ENCODE measurements at regions of chr1 and their contacts with region 1.

Region 1: DNA sequence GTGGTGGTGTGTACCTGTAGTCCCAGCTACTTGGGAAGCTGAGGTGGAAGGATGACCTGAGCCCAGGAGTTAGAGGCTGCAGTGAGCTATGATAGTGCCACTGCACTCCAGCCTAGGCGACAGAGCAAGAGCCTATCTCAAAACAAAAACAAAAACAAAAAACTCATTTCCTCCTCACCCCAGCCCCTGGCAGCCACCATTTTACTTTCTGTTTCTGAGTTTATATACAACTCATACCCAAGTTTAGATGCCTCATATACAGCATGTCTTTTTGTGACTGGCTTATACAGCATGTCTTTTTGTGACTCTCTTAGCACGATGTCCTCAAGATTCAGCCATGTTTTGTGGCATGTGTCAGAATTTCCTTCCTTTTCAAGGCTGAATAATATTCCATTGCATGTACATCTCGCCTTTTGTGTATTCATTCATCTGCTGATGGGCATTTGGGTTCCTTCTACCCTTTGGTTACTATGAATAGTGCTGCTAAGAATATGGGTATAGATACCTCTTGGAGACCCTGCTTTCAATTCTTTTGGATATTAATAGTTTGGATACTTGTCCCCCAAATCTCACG is 14.7 kb downstream of the COA7 start:
- DNase-seq: no peak
- ATAC-seq: no peak
- H3K4me3 ChIP-seq: no peak overlapping the region
- H3K4me3 Mint-ChIP-seq: no peak overlapping the region
- H3K27ac ChIP-seq: no peak overlapping the region
- H3K27ac Mint-ChIP-seq: no peak overlapping the region
- H3K4me1 ChIP-seq: peaks cover 9% of the 10 kb centered on the region
- H3K4me1 Mint-ChIP-seq: peaks cover 9% of the 10 kb centered on the region
- H3K27me3 ChIP-seq: no peaks in the 10 kb centered on the region
- H3K27me3 Mint-ChIP-seq: no peaks in the 10 kb centered on the region
- CTCF ChIP-seq: no peak

Region 2: DNA sequence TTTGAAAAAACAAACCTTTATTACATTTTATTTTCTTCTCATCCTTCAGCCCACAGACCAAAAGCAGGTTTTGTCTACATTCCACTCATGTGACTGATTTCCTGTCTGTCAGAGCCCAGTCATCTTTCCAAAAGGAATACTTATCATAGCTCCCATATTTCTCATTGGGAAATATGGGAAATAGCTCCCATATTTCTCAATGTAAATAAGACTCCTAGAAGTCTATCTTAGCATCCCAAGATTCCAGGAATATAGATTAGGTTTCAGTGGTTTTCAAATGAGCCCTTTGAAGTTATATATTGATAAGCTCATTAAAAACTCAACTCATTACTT is 785.8 kb before region 1 on chr1:
- CTCF ChIA-PET with region 1: interaction called, 3 read pairs
- POLR2A ChIA-PET with region 1: no interaction called
- intact Hi-C with region 1: loop called in 1 of 2 experiments (anchors 2 kb)
- DNase-seq: no peak
- ATAC-seq: no peak
- H3K4me3 ChIP-seq: no peak overlapping the region
- H3K4me3 Mint-ChIP-seq: no peak overlapping the region
- H3K27ac ChIP-seq: no peak overlapping the region
- H3K27ac Mint-ChIP-seq: no peak overlapping the region
- H3K4me1 ChIP-seq: no peaks in the 10 kb centered on the region
- H3K4me1 Mint-ChIP-seq: no peaks in the 10 kb centered on the region
- H3K27me3 ChIP-seq: peaks cover 9 to 15% of the 10 kb centered on the region in 2 experiments
- H3K27me3 Mint-ChIP-seq: peaks cover 65% of the 10 kb centered on the region
- CTCF ChIP-seq: no peak

Region 3: GRCh38 chr1:52141513-52142219 is 541.8 kb before region 1 on chr1 and contains the start of gene ZFYVE9:
- CTCF ChIA-PET with region 1: no interaction called
- POLR2A ChIA-PET with region 1: no interaction called
- intact Hi-C with region 1: loop called (anchors 5 kb)
- DNase-seq: peak; percentile 43 to 91 (median 68)
- ATAC-seq: peak; percentile 82
- H3K4me3 ChIP-seq: peak within 1 kb of the TSS; percentile 63
- H3K4me3 Mint-ChIP-seq: peak within 1 kb of the TSS; percentile 97
- H3K27ac ChIP-seq: no peak within 1 kb of the TSS
- H3K27ac Mint-ChIP-seq: peak within 1 kb of the TSS; percentile 85
- H3K4me1 ChIP-seq: peaks cover 23% of the 10 kb centered on the region
- H3K4me1 Mint-ChIP-seq: peaks cover 36% of the 10 kb centered on the region
- H3K27me3 ChIP-seq: no peaks in the 10 kb centered on the region
- H3K27me3 Mint-ChIP-seq: no peaks in the 10 kb centered on the region
- CTCF ChIP-seq: peak; percentile 33
- total RNA-seq, gene ZFYVE9: 5.4 to 6.1 TPM

Region 4: GRCh38 chr1:52288286-52288685 is 395.2 kb before region 1 on chr1:
- CTCF ChIA-PET with region 1: no interaction called
- POLR2A ChIA-PET with region 1: no interaction called
- intact Hi-C with region 1: no loop called
- DNase-seq: no peak
- ATAC-seq: no peak
- H3K4me3 ChIP-seq: no peak overlapping the region
- H3K4me3 Mint-ChIP-seq: no peak overlapping the region
- H3K27ac ChIP-seq: no peak overlapping the region
- H3K27ac Mint-ChIP-seq: no peak overlapping the region
- H3K4me1 ChIP-seq: no peaks in the 10 kb centered on the region
- H3K4me1 Mint-ChIP-seq: no peaks in the 10 kb centered on the region
- H3K27me3 ChIP-seq: no peaks in the 10 kb centered on the region
- H3K27me3 Mint-ChIP-seq: no peaks in the 10 kb centered on the region
- CTCF ChIP-seq: no peak

Region 5: DNA sequence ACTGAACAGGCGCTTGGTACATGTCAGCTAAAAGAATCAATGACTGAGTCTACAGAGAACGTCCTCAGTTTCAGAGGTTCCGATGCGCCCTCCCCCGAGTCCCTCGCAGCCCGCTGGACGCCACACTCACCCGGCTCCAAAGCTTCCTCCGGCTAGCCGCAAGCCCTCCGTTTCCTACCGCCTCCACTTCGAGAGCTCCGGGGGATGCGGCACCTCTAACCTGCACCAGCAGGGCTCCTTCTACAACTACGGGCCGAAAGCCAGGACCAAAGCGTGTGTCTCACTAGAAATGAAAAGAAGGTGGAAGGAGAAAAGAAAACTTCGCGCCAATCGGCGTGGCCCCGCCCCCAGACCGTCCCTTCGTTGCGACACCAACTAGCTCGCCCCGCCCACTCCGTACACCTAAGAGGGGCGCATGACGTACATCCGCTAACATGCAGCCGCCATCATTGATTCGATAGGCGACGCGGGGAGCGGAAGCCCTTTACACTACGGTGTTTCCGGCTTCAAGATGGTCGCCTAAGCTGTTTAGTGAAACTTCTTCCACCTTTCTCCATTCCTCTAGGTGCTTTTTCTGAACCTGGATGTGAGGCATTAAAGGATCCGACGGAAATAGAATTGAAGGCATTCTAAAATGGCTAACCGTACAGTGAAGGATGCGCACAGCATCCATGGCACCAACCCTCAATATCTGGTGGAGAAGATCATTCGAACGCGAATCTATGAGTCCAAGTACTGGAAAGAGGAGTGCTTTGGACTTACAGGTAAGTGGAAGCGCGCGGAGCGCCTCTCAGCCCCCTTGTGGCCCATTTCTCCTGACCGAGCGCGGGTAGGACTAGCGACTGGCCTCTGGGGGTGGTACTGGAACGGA is 279.1 kb before region 1 on chr1 and contains the starts of genes ORC1 and PRPF38A:
- CTCF ChIA-PET with region 1: interaction called, 6 read pairs
- POLR2A ChIA-PET with region 1: interaction called, 8 read pairs
- intact Hi-C with region 1: loop called (anchors 1 to 10 kb)
- DNase-seq: peak; percentile 94 to 100 (median 97)
- ATAC-seq: peak; percentile 89
- H3K4me3 ChIP-seq: peak within 1 kb of the TSS; percentile 62
- H3K4me3 Mint-ChIP-seq: peak within 1 kb of the TSS; percentile 98
- H3K27ac ChIP-seq: peak within 1 kb of the TSS; percentile 88 to 89
- H3K27ac Mint-ChIP-seq: peak within 1 kb of the TSS; percentile 99
- H3K4me1 ChIP-seq: peaks cover 13% of the 10 kb centered on the region
- H3K4me1 Mint-ChIP-seq: peaks cover 48% of the 10 kb centered on the region
- H3K27me3 ChIP-seq: no peaks in the 10 kb centered on the region
- H3K27me3 Mint-ChIP-seq: no peaks in the 10 kb centered on the region
- CTCF ChIP-seq: peak; percentile 34
- total RNA-seq, gene ORC1: 1.1 to 1.3 TPM
- total RNA-seq, gene PRPF38A: 56.2 to 63.6 TPM

Region 6: GRCh38 chr1:52474807-52475206 is 208.6 kb before region 1 on chr1:
- CTCF ChIA-PET with region 1: interaction called, 6 read pairs
- POLR2A ChIA-PET with region 1: no interaction called
- intact Hi-C with region 1: loop called in 1 of 2 experiments (anchors 10 kb)
- DNase-seq: no peak
- ATAC-seq: no peak
- H3K4me3 ChIP-seq: no peak overlapping the region
- H3K4me3 Mint-ChIP-seq: no peak overlapping the region
- H3K27ac ChIP-seq: no peak overlapping the region
- H3K27ac Mint-ChIP-seq: no peak overlapping the region
- H3K4me1 ChIP-seq: no peaks in the 10 kb centered on the region
- H3K4me1 Mint-ChIP-seq: peaks cover 5% of the 10 kb centered on the region
- H3K27me3 ChIP-seq: no peaks in the 10 kb centered on the region
- H3K27me3 Mint-ChIP-seq: no peaks in the 10 kb centered on the region
- CTCF ChIP-seq: no peak

Region 7: GRCh38 chr1:52601991-52602855 is 81.2 kb before region 1 on chr1 and contains the start of gene GPX7:
- CTCF ChIA-PET with region 1: interaction called, 4 read pairs
- POLR2A ChIA-PET with region 1: interaction called, 4 read pairs
- intact Hi-C with region 1: loop called in 1 of 2 experiments (anchors 5 kb)
- DNase-seq: peak; percentile 42 to 86 (median 64)
- ATAC-seq: peak; percentile 84
- H3K4me3 ChIP-seq: peak within 1 kb of the TSS; percentile 74
- H3K4me3 Mint-ChIP-seq: peak within 1 kb of the TSS; percentile 92
- H3K27ac ChIP-seq: peak within 1 kb of the TSS; percentile 62 to 73
- H3K27ac Mint-ChIP-seq: peak within 1 kb of the TSS; percentile 96
- H3K4me1 ChIP-seq: peaks cover 51% of the 10 kb centered on the region
- H3K4me1 Mint-ChIP-seq: peaks cover 50% of the 10 kb centered on the region
- H3K27me3 ChIP-seq: no peaks in the 10 kb centered on the region
- H3K27me3 Mint-ChIP-seq: no peaks in the 10 kb centered on the region
- CTCF ChIP-seq: no peak
- total RNA-seq, gene GPX7: 11.7 to 12.5 TPM

Region 8: GRCh38 chr1:52709016-52709415 is 25.6 kb after region 1 on chr1:
- CTCF ChIA-PET with region 1: no interaction called
- POLR2A ChIA-PET with region 1: no interaction called
- intact Hi-C with region 1: no loop called
- DNase-seq: no peak
- ATAC-seq: no peak
- H3K4me3 ChIP-seq: no peak overlapping the region
- H3K4me3 Mint-ChIP-seq: no peak overlapping the region
- H3K27ac ChIP-seq: no peak overlapping the region
- H3K27ac Mint-ChIP-seq: no peak overlapping the region
- H3K4me1 ChIP-seq: peaks cover 2% of the 10 kb centered on the region
- H3K4me1 Mint-ChIP-seq: no peaks in the 10 kb centered on the region
- H3K27me3 ChIP-seq: no peaks in the 10 kb centered on the region
- H3K27me3 Mint-ChIP-seq: no peaks in the 10 kb centered on the region
- CTCF ChIP-seq: no peak